Activated CD8-positive, alpha-beta T cell treated with anti-CD3 and anti-CD28 coated beads, Interleukin-2, amount 10 ng/mL, durations not matched to agents 7 days and 5 days (primary cell): ENCODE measurements at regions of chr6 and their contacts with region 1.

Region 1: GRCh38 chr6:37207903-37208456 is 38.0 kb downstream of the PIM1 start:
- DNase-seq: peak; percentile 94
- ATAC-seq: peak; percentile 70
- H3K4me3 Mint-ChIP-seq: peak overlapping the region; percentile 45
- H3K27ac Mint-ChIP-seq: peak overlapping the region; percentile 87
- H3K4me1 Mint-ChIP-seq: peaks cover 79% of the 10 kb centered on the region
- H3K27me3 Mint-ChIP-seq: no peaks in the 10 kb centered on the region

Region 2: DNA sequence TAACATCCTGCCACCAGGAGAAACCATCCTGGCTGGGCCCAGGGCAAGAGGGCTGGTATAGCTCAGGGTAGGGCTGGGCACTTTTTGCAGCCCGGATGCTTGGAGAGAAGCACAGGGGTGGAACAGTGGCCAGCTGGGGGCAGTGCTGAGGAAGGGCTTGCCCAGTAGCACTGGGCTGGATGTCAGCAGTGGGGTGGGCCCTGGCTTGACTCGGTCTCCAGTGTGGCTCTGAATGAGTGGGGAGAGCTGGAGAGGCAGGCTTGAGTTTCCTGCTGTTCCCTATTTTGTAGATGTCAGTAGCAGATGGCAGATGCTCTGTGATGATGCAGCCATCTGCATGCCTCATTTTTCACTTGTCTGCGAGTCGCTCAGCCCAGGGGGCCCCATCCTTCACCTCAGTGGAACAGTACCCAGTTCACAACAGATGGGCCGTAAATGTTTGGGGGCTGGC is 1638.9 kb before region 1 on chr6:
- CTCF ChIA-PET with region 1: no interaction called
- POLR2A ChIA-PET with region 1: no interaction called
- DNase-seq: peak; percentile 50
- ATAC-seq: peak; percentile 71
- H3K4me3 Mint-ChIP-seq: no peak overlapping the region
- H3K27ac Mint-ChIP-seq: no peak overlapping the region
- H3K4me1 Mint-ChIP-seq: peaks cover 3% of the 10 kb centered on the region
- H3K27me3 Mint-ChIP-seq: peaks cover 14% of the 10 kb centered on the region

Region 3: DNA sequence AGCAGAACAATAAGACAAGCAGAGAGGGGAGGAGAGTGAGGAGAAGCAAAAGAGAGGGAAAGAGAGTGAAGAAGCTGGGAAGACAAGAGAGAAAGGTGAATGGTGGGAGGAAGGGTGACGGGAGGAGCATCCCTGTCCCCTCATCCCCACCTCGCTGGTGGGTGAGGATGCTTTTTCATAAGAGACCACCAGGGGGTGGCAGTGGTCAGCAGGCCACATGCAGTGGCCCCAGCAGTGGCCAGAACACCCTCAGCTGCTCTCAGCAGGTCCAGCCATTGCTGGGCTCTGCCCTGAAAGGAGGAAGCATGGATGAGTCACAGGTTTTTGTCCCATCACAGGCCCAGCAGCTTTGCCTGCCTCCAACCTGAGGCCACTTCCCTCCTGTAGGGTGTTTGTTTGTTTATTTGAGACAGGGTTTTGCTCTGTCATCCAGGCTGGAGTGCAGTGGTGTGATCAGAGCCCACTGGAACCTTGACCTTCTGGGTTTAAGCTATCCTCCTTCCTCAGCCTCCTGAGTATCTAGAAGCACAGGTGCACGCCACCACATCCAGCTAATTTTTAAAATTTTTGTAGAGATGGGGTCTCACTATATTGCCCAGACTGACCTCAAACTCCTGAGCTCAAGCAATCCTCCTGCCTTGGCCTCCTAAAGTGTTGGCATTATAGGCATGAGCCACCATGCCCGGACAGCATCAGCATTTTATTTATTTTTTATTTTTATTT is 178.6 kb before region 1 on chr6:
- CTCF ChIA-PET with region 1: interaction called, 769 read pairs
- POLR2A ChIA-PET with region 1: interaction called, 11 read pairs
- DNase-seq: peak; percentile 64
- ATAC-seq: peak; percentile 62
- H3K4me3 Mint-ChIP-seq: no peak overlapping the region
- H3K27ac Mint-ChIP-seq: peak overlapping the region; percentile 75
- H3K4me1 Mint-ChIP-seq: peaks cover 84% of the 10 kb centered on the region
- H3K27me3 Mint-ChIP-seq: no peaks in the 10 kb centered on the region

Region 4: DNA sequence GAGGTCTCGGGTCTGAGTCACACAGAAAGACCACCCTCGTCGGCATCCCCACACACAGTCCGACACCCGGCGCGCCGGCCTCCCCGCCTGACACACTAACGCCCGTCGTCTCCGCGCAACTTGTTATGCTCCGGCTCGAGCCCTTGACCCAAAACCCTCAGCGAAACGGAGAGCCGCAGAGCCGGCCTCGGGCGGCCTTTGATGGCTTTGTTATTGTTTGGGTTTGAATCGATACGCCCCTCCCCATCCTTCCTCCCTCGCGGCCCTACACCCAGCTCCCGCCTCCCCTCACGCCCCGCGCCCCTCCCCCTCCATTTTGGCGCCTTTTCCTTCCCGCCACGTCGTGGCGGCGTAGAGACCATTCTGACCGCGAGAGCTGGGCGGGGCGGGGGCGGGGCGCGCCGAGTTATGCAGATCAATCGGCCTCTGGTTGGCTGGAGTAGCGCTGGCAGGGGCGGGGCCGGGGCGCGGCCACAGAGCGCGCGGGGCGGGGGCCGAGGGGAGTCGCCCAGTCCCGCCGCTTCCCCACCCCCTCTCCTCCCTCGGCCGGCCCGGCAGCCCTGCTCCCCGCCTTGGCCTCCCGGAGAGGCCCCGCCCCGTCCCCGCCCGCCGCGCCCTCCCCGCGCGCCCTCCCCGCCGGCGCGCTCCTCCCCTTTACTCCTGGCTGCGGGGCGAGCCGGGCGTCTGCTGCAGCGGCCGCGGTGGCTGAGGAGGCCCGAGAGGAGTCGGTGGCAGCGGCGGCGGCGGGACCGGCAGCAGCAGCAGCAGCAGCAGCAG is 38.3 kb before region 1 on chr6 and contains the start of gene PIM1:
- CTCF ChIA-PET with region 1: interaction called, 210 read pairs
- POLR2A ChIA-PET with region 1: interaction called, 351 read pairs
- DNase-seq: peak; percentile 100
- ATAC-seq: peak; percentile 82
- H3K4me3 Mint-ChIP-seq: peak within 1 kb of the TSS; percentile 100
- H3K27ac Mint-ChIP-seq: peak within 1 kb of the TSS; percentile 99
- H3K4me1 Mint-ChIP-seq: peaks cover 31% of the 10 kb centered on the region
- H3K27me3 Mint-ChIP-seq: peaks cover 4% of the 10 kb centered on the region
- total RNA-seq, gene PIM1: 432 to 449 TPM

Region 5: DNA sequence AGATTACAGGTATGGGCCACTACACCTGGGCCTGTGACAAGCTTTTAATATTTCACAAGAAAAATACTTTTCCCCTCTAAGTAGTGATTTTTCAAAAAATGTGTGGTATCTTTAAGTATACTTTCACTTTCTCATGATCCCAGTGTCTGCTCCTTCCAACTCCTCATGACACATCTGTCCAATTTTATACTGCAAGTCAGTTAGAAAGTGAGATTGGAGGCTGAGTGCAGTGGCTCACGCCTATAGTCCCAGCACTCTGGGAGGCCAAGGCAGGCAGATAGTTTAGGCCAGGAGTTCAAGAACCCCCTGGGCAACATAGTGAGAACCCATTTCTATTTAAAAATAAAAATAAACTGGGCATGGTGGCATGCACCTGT is 17.8 kb before region 1 on chr6:
- CTCF ChIA-PET with region 1: interaction called, 85 read pairs
- POLR2A ChIA-PET with region 1: interaction called, 20 read pairs
- DNase-seq: no peak
- ATAC-seq: peak; percentile 45
- H3K4me3 Mint-ChIP-seq: peak overlapping the region; percentile 12
- H3K27ac Mint-ChIP-seq: peak overlapping the region; percentile 85
- H3K4me1 Mint-ChIP-seq: peaks cover 76% of the 10 kb centered on the region
- H3K27me3 Mint-ChIP-seq: no peaks in the 10 kb centered on the region

Region 6: DNA sequence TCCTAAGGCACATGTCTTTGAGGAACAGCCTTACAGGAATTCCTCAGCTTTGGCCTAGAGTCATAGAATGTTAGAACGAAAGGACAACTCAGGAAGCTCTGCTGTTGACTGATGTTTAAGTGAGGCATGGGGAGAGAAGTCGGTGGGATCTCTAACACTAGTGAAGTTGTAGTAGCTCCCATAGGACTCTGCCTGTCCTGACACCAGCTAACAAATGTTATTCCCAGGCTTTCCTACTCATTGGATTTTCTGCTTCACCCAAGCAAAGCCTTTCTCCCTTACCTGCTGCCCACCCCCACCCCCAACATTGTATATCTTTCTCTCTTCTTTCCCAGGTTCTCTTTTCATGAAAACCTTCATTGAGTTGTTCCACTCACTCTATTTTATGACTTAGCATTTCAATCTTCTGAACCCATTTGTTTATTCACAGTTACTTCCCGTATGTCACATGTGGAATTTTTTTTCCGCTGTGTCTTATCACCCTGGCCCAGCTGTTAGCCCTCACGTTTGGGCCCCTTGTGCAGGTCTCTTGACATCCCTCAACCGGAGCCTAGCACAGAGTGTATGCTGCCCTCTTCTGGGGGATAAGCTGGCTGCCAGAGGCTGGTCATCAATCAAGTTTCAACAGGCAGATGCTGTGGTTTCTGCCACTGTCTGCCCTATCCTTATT is 106.6 kb after region 1 on chr6:
- CTCF ChIA-PET with region 1: interaction called, 23 read pairs
- POLR2A ChIA-PET with region 1: interaction called, 3 read pairs
- DNase-seq: peak; percentile 71
- ATAC-seq: peak; percentile 84
- H3K4me3 Mint-ChIP-seq: no peak overlapping the region
- H3K27ac Mint-ChIP-seq: no peak overlapping the region
- H3K4me1 Mint-ChIP-seq: peaks cover 20% of the 10 kb centered on the region
- H3K27me3 Mint-ChIP-seq: no peaks in the 10 kb centered on the region